Dendritic cell treated with granulocyte-macrophage colony-stimulating factor and Interleukin-4, amounts not matched to agents 40 ng/mL and 50 ng/mL, for 4 days (primary cell): ENCODE measurements at regions of chr13 and their contacts with region 1.

Region 1: GRCh38 chr13:76745261-76746200 is 140.7 kb downstream of the KCTD12 start:
- H3K4me3 Mint-ChIP-seq: peak overlapping the region; percentile 30
- H3K27ac Mint-ChIP-seq: peak overlapping the region; percentile 77
- H3K4me1 Mint-ChIP-seq: peaks cover 40% of the 10 kb centered on the region
- H3K27me3 Mint-ChIP-seq: no peaks in the 10 kb centered on the region

Region 2: DNA sequence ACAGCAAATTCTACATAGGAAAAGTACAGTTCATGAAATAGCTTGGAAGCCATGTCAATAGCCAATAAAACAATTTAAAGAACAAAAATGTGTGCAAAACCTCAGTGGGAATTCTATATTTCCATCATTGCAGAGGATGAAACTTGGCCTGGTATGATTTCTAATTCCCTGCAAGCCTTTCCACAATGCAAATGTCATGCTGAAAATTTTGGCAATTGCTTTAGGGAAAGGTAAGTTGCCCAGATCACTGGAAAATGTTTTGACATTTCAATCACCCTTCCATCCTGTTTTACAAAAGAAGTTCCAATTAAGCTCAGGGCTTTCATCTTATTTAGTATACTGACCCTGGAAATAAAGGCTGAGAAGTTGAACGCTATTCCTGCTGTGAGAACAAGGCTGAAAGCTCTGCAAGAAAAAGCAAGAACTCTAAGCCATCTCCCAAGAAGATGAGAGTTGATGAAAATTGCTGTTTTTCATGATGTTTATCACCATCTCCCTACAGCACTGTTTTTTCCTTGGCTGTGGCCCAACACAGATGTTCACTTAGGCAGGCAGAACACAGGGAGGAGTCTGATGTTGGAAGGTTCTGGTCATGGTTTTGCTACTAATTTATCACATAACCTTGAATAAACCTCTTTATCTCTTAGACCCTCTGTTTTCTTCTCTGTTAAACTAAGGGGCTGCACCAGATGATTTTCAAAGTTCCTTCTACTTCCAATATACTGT is 123.1 kb before region 1 on chr13:
- intact Hi-C with region 1: no loop called
- H3K4me3 Mint-ChIP-seq: no peak overlapping the region
- H3K27ac Mint-ChIP-seq: no peak overlapping the region
- H3K4me1 Mint-ChIP-seq: peaks cover 6% of the 10 kb centered on the region
- H3K27me3 Mint-ChIP-seq: peaks cover 7% of the 10 kb centered on the region

Region 3: GRCh38 chr13:76792731-76793347 is 47.3 kb after region 1 on chr13:
- intact Hi-C with region 1: loop called (anchors 10 kb)
- H3K4me3 Mint-ChIP-seq: no peak overlapping the region
- H3K27ac Mint-ChIP-seq: peak overlapping the region; percentile 26
- H3K4me1 Mint-ChIP-seq: peaks cover 28% of the 10 kb centered on the region
- H3K27me3 Mint-ChIP-seq: no peaks in the 10 kb centered on the region

Region 4: GRCh38 chr13:76808927-76809326 is 63.4 kb after region 1 on chr13:
- intact Hi-C with region 1: no loop called
- H3K4me3 Mint-ChIP-seq: no peak overlapping the region
- H3K27ac Mint-ChIP-seq: no peak overlapping the region
- H3K4me1 Mint-ChIP-seq: peaks cover 35% of the 10 kb centered on the region
- H3K27me3 Mint-ChIP-seq: no peaks in the 10 kb centered on the region

Region 5: GRCh38 chr13:76886292-76887075 is 141.0 kb after region 1 on chr13 and contains the start of gene KCTD12:
- intact Hi-C with region 1: loop called (anchors 5 kb)
- H3K4me3 Mint-ChIP-seq: peak within 1 kb of the TSS; percentile 93
- H3K27ac Mint-ChIP-seq: peak within 1 kb of the TSS; percentile 97
- H3K4me1 Mint-ChIP-seq: peaks cover 25% of the 10 kb centered on the region
- H3K27me3 Mint-ChIP-seq: peaks cover 4% of the 10 kb centered on the region

Region 6: DNA sequence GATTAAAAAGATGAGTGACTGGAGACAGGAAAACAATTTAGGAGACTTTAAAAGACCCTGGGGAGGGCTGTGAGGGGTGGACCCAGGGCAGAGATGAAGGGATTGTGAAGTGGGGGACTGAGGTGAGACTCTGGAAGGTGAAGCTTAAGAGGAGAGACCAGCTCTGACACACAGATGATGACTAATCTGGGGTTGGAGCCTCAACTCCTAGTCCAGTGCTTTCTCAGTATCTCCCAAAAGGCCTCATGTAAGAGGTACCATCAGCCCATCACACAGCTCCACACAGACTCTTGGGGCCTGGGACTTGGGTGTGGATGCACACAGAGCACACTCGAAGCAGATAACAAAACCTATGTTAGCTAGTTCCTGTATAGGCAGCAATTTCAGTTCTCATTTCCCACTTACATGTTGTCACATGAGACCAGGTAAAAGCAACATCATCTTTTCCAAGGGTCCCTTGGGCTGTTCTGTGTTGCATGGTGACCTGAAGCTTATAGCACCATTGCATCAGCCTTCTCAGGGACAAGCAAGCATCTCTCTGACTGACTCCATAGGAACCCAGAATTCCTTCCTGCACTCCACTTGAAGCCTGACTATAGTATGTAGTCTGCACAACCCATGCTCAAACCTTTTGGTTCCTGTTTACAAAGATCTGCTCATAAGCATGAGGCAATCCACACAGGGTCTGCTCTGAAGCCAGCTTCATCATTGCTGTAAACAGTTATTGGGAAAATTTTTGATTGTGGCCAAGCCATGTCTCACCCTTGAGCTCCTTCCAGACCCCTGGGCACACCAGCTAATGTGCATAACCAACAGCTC is 669.9 kb after region 1 on chr13:
- intact Hi-C with region 1: no loop called
- H3K4me3 Mint-ChIP-seq: no peak overlapping the region
- H3K27ac Mint-ChIP-seq: peak overlapping the region; percentile 35
- H3K4me1 Mint-ChIP-seq: peaks cover 10% of the 10 kb centered on the region
- H3K27me3 Mint-ChIP-seq: peaks cover 2% of the 10 kb centered on the region